Mammary epithelial cell (primary cell): ENCODE measurements at regions of chr12 and their contacts with region 1.

Region 1: GRCh38 chr12:49503674-49504180 is 35.1 kb upstream of the KCNH3 start:
- DNase-seq: peak; percentile 92
- H3K4me3 ChIP-seq: no peak overlapping the region
- H3K27ac ChIP-seq: peak overlapping the region; percentile 82
- H3K4me1 ChIP-seq: peaks cover 35% of the 10 kb centered on the region
- H3K27me3 ChIP-seq: no peaks in the 10 kb centered on the region
- CTCF ChIP-seq: no peak

Region 2: GRCh38 chr12:49088190-49088931 is 415.4 kb before region 1 on chr12:
- CTCF ChIA-PET with region 1: interaction called, 10 read pairs
- dilution Hi-C with region 1: no loop called
- in situ Hi-C with region 1: no loop called
- intact Hi-C with region 1: no loop called
- DNase-seq: peak; percentile 90
- H3K4me3 ChIP-seq: no peak overlapping the region
- H3K27ac ChIP-seq: no peak overlapping the region
- H3K4me1 ChIP-seq: peaks cover 26% of the 10 kb centered on the region
- H3K27me3 ChIP-seq: peaks cover 27% of the 10 kb centered on the region
- CTCF ChIP-seq: peak; percentile 88 to 90

Region 3: GRCh38 chr12:49489720-49490119 is 14.0 kb before region 1 on chr12:
- CTCF ChIA-PET with region 1: interaction called, 9 read pairs
- dilution Hi-C with region 1: no loop called
- in situ Hi-C with region 1: no loop called
- intact Hi-C with region 1: loop called (anchors 1 kb)
- DNase-seq: peak; percentile 91
- H3K4me3 ChIP-seq: no peak overlapping the region
- H3K27ac ChIP-seq: peak overlapping the region; percentile 48
- H3K4me1 ChIP-seq: peaks cover 30% of the 10 kb centered on the region
- H3K27me3 ChIP-seq: no peaks in the 10 kb centered on the region
- CTCF ChIP-seq: peak in 1 of 2 donors; percentile 24

Region 4: DNA sequence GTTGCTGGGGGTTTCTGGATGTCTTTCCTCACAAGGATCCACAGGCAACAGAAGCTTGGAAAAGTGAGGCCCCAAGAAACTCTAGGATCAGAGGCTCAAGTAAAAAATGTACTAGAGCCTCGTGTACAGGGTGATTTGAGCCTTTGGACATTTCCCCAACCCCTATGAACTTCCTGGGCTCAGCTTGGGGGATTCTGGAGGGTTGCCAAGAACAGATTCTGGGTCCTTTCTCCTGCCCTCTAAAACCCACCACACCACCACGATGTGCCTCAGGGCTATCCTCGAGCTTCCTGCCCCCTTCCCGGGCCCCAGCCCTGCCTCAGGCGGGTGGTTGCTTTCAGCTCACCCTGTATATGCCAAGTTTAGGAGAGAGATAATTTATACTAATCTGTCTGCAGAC is 101.1 kb after region 1 on chr12:
- CTCF ChIA-PET with region 1: no interaction called
- dilution Hi-C with region 1: loop called (anchors 5 kb)
- in situ Hi-C with region 1: no loop called
- intact Hi-C with region 1: no loop called
- DNase-seq: no peak
- H3K4me3 ChIP-seq: no peak overlapping the region
- H3K27ac ChIP-seq: no peak overlapping the region
- H3K4me1 ChIP-seq: no peaks in the 10 kb centered on the region
- H3K27me3 ChIP-seq: no peaks in the 10 kb centered on the region
- CTCF ChIP-seq: no peak